ENCODE measurements at regions of chr16 and their contacts with region 1.

Region 1: DNA sequence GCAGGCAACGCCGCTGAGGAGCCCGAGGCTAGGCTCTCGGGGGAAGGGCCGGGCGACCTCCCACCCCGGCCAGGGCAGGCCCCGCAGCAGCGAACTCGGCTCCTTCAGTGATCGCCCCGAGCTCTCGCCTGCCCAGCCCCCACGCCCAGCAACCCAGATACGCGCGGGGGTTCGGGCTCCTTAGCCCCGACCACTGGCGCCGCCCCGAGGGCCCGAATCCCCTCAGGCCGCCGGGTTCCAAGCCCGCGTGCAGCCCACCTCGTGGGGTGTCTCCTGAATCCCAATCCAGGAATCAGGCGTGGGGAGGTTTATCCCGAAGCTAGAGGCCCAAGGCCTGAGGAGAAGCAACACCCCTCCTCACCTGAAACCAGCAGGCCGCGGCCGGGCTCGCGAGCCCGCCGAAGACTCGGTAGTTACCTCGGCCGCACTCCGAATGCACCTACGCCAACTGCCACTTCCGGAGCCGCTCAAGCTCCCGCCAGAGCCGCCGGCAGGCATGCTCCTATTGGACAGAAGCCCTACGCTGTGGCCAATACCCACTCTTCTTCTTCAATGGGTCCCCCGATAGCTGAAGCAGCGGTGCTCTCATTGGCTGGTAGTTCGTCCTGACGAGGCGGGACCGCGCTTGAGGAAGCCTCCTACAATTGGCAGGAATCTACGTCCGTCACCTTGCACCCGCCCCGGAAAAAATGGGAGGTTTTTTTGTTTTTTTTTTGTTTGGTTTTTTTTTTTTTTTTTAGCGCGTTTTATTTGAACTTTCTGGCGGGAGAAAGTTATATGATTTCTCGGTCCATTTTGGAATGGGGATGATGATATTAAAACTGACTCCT is at the start of gene RFWD3:
- DNase-seq: peak; percentile 91 to 99 (median 95)
- ATAC-seq: peak; percentile 98
- H3K4me3 ChIP-seq: peak within 1 kb of the TSS; percentile 80 to 98
- H3K4me3 Mint-ChIP-seq: peak within 1 kb of the TSS; percentile 94
- H3K27ac ChIP-seq: peak within 1 kb of the TSS; percentile 85 to 90
- H3K27ac Mint-ChIP-seq: peak within 1 kb of the TSS; percentile 94
- H3K4me1 ChIP-seq: peaks cover 30% of the 10 kb centered on the region
- H3K4me1 Mint-ChIP-seq: peaks cover 36% of the 10 kb centered on the region
- H3K27me3 ChIP-seq: no peaks in the 10 kb centered on the region
- H3K27me3 Mint-ChIP-seq: no peaks in the 10 kb centered on the region
- CTCF ChIP-seq: no peak
- total RNA-seq, gene RFWD3: 43.7 to 49.7 TPM

Region 2: DNA sequence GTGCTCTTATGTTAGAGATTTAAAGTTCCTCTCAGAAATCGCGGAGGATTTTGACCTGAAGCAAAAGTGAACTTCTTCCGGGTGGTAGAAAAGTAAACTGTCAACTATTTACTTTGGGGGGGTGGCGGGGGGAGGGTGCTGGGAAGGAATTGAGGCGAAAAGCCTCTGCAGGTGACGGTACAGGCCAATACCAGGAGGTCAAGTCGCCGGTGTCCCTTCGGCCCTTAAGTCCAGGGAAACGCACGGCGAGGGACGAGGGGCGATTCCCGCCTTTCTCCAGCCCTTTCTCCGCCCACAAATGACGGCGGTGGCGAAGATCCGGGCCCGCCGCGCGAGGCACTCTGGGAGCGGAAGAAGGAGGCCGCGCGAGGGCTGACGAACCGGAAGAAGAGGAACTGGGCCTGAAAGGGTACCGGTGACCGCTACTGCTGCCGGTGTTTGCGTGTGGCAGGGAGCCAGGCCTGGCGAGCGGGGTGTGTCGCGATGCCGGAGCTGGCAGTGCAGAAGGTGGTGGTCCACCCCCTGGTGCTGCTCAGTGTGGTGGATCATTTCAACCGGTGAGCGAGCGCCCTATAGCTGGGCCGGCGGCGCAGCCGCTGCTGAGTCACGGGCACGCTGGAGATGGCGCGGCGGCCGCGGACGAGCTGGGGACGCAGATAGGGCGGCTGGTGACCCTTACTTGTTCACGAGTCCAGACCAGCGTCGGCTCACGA is 370.1 kb before region 1 on chr16 and contains the start of gene PSMD7:
- CTCF ChIA-PET with region 1: no interaction called
- POLR2A ChIA-PET with region 1: interaction called, 8 read pairs
- intact Hi-C with region 1: loop called in 1 of 2 experiments (anchors 2 kb)
- DNase-seq: peak; percentile 77 to 93 (median 89)
- ATAC-seq: peak; percentile 86
- H3K4me3 ChIP-seq: peak within 1 kb of the TSS; percentile 83 to 95
- H3K4me3 Mint-ChIP-seq: peak within 1 kb of the TSS; percentile 95
- H3K27ac ChIP-seq: peak within 1 kb of the TSS; percentile 87 to 97
- H3K27ac Mint-ChIP-seq: peak within 1 kb of the TSS; percentile 99
- H3K4me1 ChIP-seq: peaks cover 25% of the 10 kb centered on the region
- H3K4me1 Mint-ChIP-seq: peaks cover 47% of the 10 kb centered on the region
- H3K27me3 ChIP-seq: no peaks in the 10 kb centered on the region
- H3K27me3 Mint-ChIP-seq: no peaks in the 10 kb centered on the region
- CTCF ChIP-seq: no peak
- total RNA-seq, gene PSMD7: 136 to 137 TPM

Region 3: GRCh38 chr16:74501484-74502479 is 164.9 kb before region 1 on chr16:
- CTCF ChIA-PET with region 1: no interaction called
- POLR2A ChIA-PET with region 1: no interaction called
- intact Hi-C with region 1: no loop called
- DNase-seq: no peak
- ATAC-seq: no peak
- H3K4me3 ChIP-seq: no peak overlapping the region
- H3K4me3 Mint-ChIP-seq: no peak overlapping the region
- H3K27ac ChIP-seq: no peak overlapping the region
- H3K27ac Mint-ChIP-seq: peak overlapping the region; percentile 58
- H3K4me1 ChIP-seq: no peaks in the 10 kb centered on the region
- H3K4me1 Mint-ChIP-seq: peaks cover 21% of the 10 kb centered on the region
- H3K27me3 ChIP-seq: no peaks in the 10 kb centered on the region
- H3K27me3 Mint-ChIP-seq: no peaks in the 10 kb centered on the region
- CTCF ChIP-seq: no peak

Region 4: DNA sequence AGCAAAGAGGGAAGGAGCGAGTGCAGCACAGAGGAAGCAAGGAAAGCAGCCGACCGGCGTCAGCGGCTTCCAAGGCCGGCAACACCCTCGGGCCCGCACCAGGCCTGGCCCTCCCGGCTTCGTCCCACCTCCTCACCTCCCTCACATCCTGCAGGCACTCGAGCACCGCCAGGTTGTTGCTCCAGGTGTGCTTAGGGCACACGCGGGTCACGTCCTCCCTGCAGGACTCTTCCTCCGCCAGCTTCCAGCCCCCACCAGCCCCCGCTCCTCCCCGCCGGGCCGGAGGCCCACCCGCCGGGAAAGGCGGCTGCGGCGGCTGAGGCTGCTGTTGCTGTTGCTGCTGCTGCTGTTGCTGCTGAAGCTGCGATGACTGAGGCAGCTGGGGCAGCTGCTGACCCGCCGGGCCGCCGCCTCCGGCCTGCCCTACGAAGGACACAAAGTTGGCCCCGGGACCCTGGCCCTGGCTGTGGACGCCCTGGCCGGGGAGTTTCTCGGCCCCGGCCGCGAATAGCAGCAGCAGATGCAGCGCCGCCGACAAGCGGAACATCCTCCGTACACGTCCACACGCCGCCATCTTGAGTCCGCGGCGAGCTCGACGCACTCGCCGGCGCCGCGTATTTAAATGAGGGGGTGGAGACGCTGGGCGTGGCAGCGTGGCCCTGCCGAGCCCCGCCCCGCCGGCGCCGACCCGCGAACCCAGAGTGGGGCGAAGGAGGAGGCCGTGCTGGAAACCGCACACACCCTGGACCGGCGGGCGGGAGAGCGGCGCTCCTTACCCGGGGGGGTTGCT is 59.9 kb before region 1 on chr16 and contains the start of gene GLG1:
- CTCF ChIA-PET with region 1: no interaction called
- POLR2A ChIA-PET with region 1: interaction called, 14 read pairs
- intact Hi-C with region 1: loop called (anchors 1 kb)
- DNase-seq: peak; percentile 80 to 96 (median 92)
- ATAC-seq: peak; percentile 94
- H3K4me3 ChIP-seq: peak within 1 kb of the TSS; percentile 65 to 80
- H3K4me3 Mint-ChIP-seq: peak within 1 kb of the TSS; percentile 97
- H3K27ac ChIP-seq: peak within 1 kb of the TSS; percentile 90 to 93
- H3K27ac Mint-ChIP-seq: peak within 1 kb of the TSS; percentile 97
- H3K4me1 ChIP-seq: peaks cover 65% of the 10 kb centered on the region
- H3K4me1 Mint-ChIP-seq: peaks cover 64% of the 10 kb centered on the region
- H3K27me3 ChIP-seq: no peaks in the 10 kb centered on the region
- H3K27me3 Mint-ChIP-seq: no peaks in the 10 kb centered on the region
- CTCF ChIP-seq: no peak
- total RNA-seq, gene GLG1: 73.7 to 79.4 TPM

Region 5: GRCh38 chr16:74718741-74719610 is 52.3 kb after region 1 on chr16:
- CTCF ChIA-PET with region 1: no interaction called
- POLR2A ChIA-PET with region 1: no interaction called
- intact Hi-C with region 1: no loop called
- DNase-seq: no peak
- ATAC-seq: no peak
- H3K4me3 ChIP-seq: no peak overlapping the region
- H3K4me3 Mint-ChIP-seq: no peak overlapping the region
- H3K27ac ChIP-seq: no peak overlapping the region
- H3K27ac Mint-ChIP-seq: no peak overlapping the region
- H3K4me1 ChIP-seq: no peaks in the 10 kb centered on the region
- H3K4me1 Mint-ChIP-seq: no peaks in the 10 kb centered on the region
- H3K27me3 ChIP-seq: no peaks in the 10 kb centered on the region
- H3K27me3 Mint-ChIP-seq: no peaks in the 10 kb centered on the region
- CTCF ChIP-seq: no peak

Region 6: DNA sequence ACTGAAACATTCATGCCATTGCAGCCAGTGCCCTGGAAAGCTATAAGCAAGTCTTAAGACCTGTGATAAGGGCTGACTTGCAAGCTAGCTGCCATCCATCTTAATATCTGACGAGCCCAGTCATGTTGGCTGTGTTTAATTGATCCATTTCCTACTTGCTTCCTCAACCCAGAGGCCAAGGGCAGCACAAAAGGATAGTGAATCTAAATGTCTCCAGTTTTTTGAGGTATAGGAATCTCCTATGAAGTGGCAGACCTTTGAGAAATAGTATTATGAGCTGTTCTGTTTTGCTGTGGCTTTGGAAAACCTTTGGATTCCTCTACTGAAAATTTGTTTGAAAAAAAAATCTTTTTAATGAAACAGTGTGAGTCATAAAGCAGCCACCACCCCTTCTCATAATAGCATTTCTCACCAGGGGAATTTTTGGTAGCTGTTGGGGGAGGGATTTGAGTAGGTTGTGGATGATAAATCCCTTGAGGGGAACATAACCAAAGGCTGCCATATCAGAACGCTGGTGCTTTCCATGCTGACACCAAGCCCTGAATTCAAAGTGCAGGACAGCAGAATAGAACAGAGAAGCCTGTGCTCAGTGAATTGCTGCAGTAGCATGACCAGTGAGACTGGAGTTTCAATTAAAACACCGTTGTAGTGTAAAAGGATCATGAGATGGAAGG is 345.1 kb after region 1 on chr16:
- CTCF ChIA-PET with region 1: no interaction called
- POLR2A ChIA-PET with region 1: no interaction called
- intact Hi-C with region 1: no loop called
- DNase-seq: peak in 4 of 9 experiments; percentile 5 to 66 (median 38)
- ATAC-seq: peak; percentile 85
- H3K4me3 ChIP-seq: no peak overlapping the region
- H3K4me3 Mint-ChIP-seq: no peak overlapping the region
- H3K27ac ChIP-seq: peak overlapping the region in 1 of 2 experiments; percentile 28
- H3K27ac Mint-ChIP-seq: no peak overlapping the region
- H3K4me1 ChIP-seq: no peaks in the 10 kb centered on the region
- H3K4me1 Mint-ChIP-seq: peaks cover 16% of the 10 kb centered on the region
- H3K27me3 ChIP-seq: no peaks in the 10 kb centered on the region
- H3K27me3 Mint-ChIP-seq: no peaks in the 10 kb centered on the region
- CTCF ChIP-seq: no peak

Region 7: GRCh38 chr16:75148311-75149195 is 481.9 kb after region 1 on chr16 and contains the start of gene ZFP1:
- CTCF ChIA-PET with region 1: no interaction called
- POLR2A ChIA-PET with region 1: no interaction called
- intact Hi-C with region 1: loop called in 1 of 2 experiments (anchors 2 kb)
- DNase-seq: peak; percentile 86 to 98 (median 95)
- ATAC-seq: peak; percentile 89
- H3K4me3 ChIP-seq: peak within 1 kb of the TSS; percentile 85 to 100
- H3K4me3 Mint-ChIP-seq: peak within 1 kb of the TSS; percentile 87
- H3K27ac ChIP-seq: peak within 1 kb of the TSS; percentile 84
- H3K27ac Mint-ChIP-seq: peak within 1 kb of the TSS; percentile 88
- H3K4me1 ChIP-seq: peaks cover 12% of the 10 kb centered on the region
- H3K4me1 Mint-ChIP-seq: peaks cover 16% of the 10 kb centered on the region
- H3K27me3 ChIP-seq: no peaks in the 10 kb centered on the region
- H3K27me3 Mint-ChIP-seq: no peaks in the 10 kb centered on the region
- CTCF ChIP-seq: no peak
- total RNA-seq, gene ZFP1: 11.9 to 12.9 TPM

Region 8: GRCh38 chr16:75555707-75556430 is 889.2 kb after region 1 on chr16 and contains the start of gene TMEM231:
- CTCF ChIA-PET with region 1: no interaction called
- POLR2A ChIA-PET with region 1: no interaction called
- intact Hi-C with region 1: loop called in 1 of 2 experiments (anchors 1 kb)
- DNase-seq: peak; percentile 95 to 98 (median 97)
- ATAC-seq: peak; percentile 96
- H3K4me3 ChIP-seq: peak within 1 kb of the TSS; percentile 61 to 69
- H3K4me3 Mint-ChIP-seq: peak within 1 kb of the TSS; percentile 86
- H3K27ac ChIP-seq: peak within 1 kb of the TSS; percentile 65 to 70
- H3K27ac Mint-ChIP-seq: peak within 1 kb of the TSS; percentile 88
- H3K4me1 ChIP-seq: peaks cover 12% of the 10 kb centered on the region
- H3K4me1 Mint-ChIP-seq: peaks cover 14% of the 10 kb centered on the region
- H3K27me3 ChIP-seq: no peaks in the 10 kb centered on the region
- H3K27me3 Mint-ChIP-seq: peaks cover 9% of the 10 kb centered on the region
- CTCF ChIP-seq: no peak
- total RNA-seq, gene TMEM231: 2.1 to 2.8 TPM

Region 9: DNA sequence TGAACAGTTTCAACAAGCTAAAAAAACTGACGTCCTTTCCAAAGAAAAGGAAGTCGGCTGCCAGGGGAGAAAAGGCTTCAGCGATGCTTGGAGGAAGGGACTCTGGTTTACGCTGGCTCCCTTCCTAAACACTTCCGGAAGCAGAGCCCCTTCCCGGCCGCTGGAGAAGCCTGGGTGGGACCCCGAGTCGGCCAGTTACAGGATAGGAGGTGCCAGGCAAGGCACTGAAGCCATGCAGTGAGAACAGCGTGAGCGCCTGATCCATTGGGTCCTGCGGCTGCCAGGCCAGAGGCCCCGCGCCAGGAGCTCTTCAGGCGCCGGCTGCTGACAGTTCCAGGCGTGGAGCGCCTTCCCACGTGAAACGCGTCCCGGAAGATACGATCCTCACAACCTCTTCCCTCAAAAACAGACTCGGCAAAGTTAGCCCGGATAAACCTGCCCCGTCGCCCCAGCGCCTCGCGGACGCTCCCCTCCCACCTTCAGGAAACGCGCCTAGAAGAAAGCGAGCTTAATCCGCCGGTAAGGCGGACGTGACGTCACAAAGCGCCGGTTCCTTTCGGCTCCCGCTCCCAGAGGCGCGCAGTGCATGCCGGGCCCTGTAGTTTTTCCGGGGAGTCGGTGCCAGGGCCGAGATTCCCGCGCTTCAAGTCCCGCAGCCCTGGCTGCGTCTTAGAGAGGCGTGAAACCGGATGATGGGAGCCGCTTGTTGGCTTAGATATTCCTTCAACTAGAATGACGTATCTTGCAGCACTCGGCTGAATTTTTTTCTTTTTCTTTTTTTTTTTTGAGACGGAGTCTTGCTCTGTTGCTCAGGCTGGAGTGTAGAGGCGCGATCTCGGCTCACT is 956.3 kb after region 1 on chr16 and contains the start of gene ADAT1:
- CTCF ChIA-PET with region 1: no interaction called
- POLR2A ChIA-PET with region 1: no interaction called
- intact Hi-C with region 1: loop called in 1 of 2 experiments (anchors 10 kb)
- DNase-seq: peak; percentile 94 to 100 (median 98)
- ATAC-seq: peak; percentile 85
- H3K4me3 ChIP-seq: peak within 1 kb of the TSS; percentile 90 to 97
- H3K4me3 Mint-ChIP-seq: peak within 1 kb of the TSS; percentile 98
- H3K27ac ChIP-seq: peak within 1 kb of the TSS; percentile 89 to 98
- H3K27ac Mint-ChIP-seq: peak within 1 kb of the TSS; percentile 98
- H3K4me1 ChIP-seq: peaks cover 36% of the 10 kb centered on the region
- H3K4me1 Mint-ChIP-seq: peaks cover 58% of the 10 kb centered on the region
- H3K27me3 ChIP-seq: no peaks in the 10 kb centered on the region
- H3K27me3 Mint-ChIP-seq: no peaks in the 10 kb centered on the region
- CTCF ChIP-seq: no peak
- total RNA-seq, gene ADAT1: 44.4 to 47.6 TPM

Measured in CD8-positive, alpha-beta T cell (primary cell).